H1 (cell line): ENCODE measurements at regions of chr2 and their contacts with region 1.

Region 1: DNA sequence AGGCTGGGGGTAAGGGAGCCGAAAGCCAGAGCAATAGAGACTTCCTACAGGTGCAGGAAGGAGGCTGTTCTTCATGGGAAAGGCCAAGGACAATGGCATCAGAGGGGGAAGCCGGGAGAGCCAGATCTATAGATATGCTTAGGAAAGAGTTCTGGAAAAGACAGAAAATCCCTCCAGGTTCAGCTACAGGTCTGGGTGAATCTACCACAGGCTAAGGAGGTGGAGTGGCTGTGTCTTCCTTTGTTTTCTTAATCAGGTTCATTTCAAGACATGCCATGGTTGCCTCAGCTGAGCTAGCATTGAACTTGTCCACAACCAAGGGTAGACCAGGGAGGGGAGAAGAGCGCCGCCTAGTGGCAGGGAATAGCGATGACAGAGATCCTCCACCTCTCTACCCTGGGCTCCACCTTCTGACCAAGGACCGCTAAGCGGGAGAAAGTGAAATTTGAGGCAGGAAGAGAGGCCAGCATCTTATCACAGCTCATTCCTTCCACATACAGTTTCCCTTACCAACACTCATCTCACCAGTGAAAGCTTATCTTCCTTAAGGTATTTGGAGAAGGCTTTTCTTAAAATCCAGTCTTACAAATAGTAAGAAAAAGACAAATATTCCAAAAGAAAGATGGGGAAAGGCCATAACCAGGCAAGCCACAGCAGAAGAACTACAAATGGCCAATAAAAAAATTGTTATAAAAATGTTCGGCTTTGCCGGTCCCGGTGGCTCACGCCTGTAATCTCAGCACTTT is 74.2 kb downstream of the VIT start:
- DNase-seq: peak; percentile 62 to 86
- H3K4me3 ChIP-seq: no peak overlapping the region
- H3K27ac ChIP-seq: no peak overlapping the region
- H3K4me1 ChIP-seq: no peaks in the 10 kb centered on the region; a peak in 1 of 7 replicates
- H3K27me3 ChIP-seq: no peaks in the 10 kb centered on the region; a peak in 1 of 7 replicates
- CTCF ChIP-seq: peak; percentile 96 to 99 (median 98)
- EP300 ChIP-seq: no peak
- POLR2A ChIP-seq: no peak
- RAD21 ChIP-seq: peak; percentile 90 to 91

Region 2: DNA sequence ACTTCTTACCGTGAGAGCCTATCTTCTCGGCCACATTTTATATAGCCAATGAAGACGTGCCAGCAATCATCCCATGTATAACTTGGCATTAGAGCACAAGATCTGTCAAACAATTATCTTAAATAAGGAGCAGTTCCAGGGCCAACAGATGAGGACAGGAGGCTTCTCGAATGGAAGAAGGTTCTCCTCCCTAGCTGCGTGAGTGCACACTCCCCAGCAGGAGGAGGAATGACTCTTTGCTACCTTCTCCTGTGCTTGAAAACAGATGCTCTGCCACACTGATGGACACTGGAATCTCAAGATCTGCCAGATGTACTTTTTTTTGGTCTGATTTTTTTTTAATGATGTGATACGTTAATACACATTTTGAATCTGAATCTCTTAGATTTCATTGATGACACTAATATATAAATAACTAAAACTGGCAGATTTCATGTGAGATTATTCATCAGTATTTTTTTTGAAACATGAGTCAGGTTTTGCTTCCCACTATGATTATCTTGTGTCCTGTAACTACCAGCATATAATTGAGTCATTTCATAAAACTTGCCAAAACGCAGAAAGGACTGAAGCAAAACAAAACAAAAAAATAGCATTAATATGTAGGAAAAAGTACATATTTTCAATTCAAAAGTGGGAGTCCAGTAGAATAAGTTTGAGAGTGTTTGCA is 74.8 kb before region 1 on chr2:
- CTCF ChIA-PET with region 1: interaction called, 84 read pairs
- POLR2A ChIA-PET with region 1: interaction called, 3 read pairs
- DNase-seq: no peak
- H3K4me3 ChIP-seq: no peak overlapping the region
- H3K27ac ChIP-seq: no peak overlapping the region
- H3K4me1 ChIP-seq: no peaks in the 10 kb centered on the region
- H3K27me3 ChIP-seq: no peaks in the 10 kb centered on the region
- CTCF ChIP-seq: peak; percentile 35 to 52 (median 45)
- EP300 ChIP-seq: no peak
- POLR2A ChIP-seq: no peak
- RAD21 ChIP-seq: peak; percentile 51 to 63; a peak in 3 of 4 replicates

Region 3: DNA sequence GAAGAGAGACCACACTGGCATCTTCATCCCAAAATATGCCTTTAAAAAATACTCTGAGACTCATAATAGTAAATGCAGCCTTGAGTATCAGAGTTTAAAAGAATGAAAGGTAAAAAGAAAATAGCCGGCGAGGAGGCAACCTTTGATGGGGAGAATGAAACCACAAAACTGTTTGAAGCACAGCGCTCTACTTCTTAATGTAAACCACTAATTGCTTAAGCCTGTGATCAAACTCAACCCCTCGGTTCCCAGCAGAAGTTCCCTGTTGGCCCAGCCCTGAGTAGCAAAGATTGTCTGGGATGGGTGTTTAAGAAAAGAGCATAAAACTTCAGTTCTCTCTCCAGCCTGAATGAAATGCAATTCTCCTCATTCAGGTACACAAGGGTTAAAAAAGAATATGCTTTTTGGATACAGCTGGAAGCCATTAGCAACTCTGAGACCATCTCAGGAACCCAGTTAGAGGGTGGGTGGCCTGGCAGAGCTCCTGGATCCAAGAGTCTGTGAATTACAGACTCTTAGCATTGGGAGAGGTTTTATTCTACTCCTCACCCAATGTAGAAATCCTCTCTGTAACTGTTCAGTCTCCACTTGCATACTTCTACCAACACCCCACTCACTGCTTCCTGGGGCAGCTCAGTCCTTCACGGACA is 29.4 kb before region 1 on chr2:
- CTCF ChIA-PET with region 1: interaction called, 24 read pairs
- POLR2A ChIA-PET with region 1: no interaction called
- DNase-seq: no peak
- H3K4me3 ChIP-seq: no peak overlapping the region
- H3K27ac ChIP-seq: no peak overlapping the region
- H3K4me1 ChIP-seq: peaks cover 0 to 8% (median under 1%) of the 10 kb centered on the region in 4 experiments; a peak in 2 of 7 replicates
- H3K27me3 ChIP-seq: no peaks in the 10 kb centered on the region
- CTCF ChIP-seq: no peak
- EP300 ChIP-seq: no peak
- POLR2A ChIP-seq: no peak
- RAD21 ChIP-seq: no peak

Region 4: DNA sequence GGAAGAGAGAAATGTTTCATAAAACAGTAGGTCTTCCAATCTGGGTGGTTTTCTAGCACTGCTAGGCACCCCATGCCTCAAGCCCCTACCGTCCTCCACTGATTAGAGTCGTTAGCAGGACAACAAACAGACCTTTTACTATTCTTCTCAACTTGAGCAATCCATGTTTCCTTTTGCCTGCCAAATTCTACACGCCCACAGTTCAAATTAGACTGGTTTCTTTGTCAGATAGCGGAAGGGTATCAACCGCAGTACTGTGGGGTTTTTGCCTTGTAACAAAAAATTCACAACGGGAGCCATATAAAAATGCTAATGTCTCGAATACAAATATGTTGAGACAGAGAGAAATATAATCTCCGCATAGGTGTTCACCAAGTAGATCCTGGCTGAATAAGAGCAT is 14.3 kb before region 1 on chr2:
- CTCF ChIA-PET with region 1: interaction called, 46 read pairs
- POLR2A ChIA-PET with region 1: no interaction called
- DNase-seq: no peak
- H3K4me3 ChIP-seq: no peak overlapping the region
- H3K27ac ChIP-seq: no peak overlapping the region
- H3K4me1 ChIP-seq: peaks cover 3 to 12% (median 7%) of the 10 kb centered on the region in 4 experiments; a peak in 6 of 7 replicates
- H3K27me3 ChIP-seq: no peaks in the 10 kb centered on the region
- CTCF ChIP-seq: no peak
- EP300 ChIP-seq: no peak
- POLR2A ChIP-seq: no peak
- RAD21 ChIP-seq: no peak